Heart right ventricle (tissue), 16 donors: ENCODE measurements at regions of chrX and their contacts with region 1.

Region 1: DNA sequence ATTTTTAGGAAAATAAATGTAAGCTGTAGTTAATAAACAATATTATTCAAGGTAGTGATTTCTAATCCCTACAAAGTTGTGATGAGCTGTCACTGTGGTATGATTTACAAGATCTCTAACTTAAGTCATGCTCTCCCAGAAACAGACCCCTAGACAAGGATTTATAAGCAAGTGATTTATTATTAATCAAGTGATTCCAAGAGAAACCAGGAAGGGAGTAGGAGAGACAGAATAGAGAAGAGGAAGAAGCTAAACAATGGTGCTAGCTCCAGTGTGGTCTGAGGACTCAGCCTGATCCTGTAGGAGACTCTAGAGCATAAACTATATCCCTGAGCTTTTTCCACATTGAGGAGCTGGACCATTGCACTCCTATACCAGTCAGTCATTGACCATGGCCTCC is 73.1 kb downstream of the SYTL5 start:
- DNase-seq: no peak
- ATAC-seq: no peak
- H3K4me3 ChIP-seq: no peak overlapping the region
- H3K27ac ChIP-seq: no peak overlapping the region
- H3K4me1 ChIP-seq: no peaks in the 10 kb centered on the region
- H3K27me3 ChIP-seq: peaks cover 0 to 43% (median 0%) of the 10 kb centered on the region in 7 donors
- CTCF ChIP-seq: no peak

Region 2: GRCh38 chrX:37816766-37817165 is 262.7 kb before region 1 on chrX:
- intact Hi-C with region 1: no loop called
- DNase-seq: no peak
- ATAC-seq: no peak
- H3K4me3 ChIP-seq: no peak overlapping the region
- H3K27ac ChIP-seq: no peak overlapping the region
- H3K4me1 ChIP-seq: peaks cover 0 to 3% (median 0%) of the 10 kb centered on the region in 9 donors
- H3K27me3 ChIP-seq: peaks cover 0 to 33% (median 0%) of the 10 kb centered on the region in 7 donors
- CTCF ChIP-seq: no peak

Region 3: DNA sequence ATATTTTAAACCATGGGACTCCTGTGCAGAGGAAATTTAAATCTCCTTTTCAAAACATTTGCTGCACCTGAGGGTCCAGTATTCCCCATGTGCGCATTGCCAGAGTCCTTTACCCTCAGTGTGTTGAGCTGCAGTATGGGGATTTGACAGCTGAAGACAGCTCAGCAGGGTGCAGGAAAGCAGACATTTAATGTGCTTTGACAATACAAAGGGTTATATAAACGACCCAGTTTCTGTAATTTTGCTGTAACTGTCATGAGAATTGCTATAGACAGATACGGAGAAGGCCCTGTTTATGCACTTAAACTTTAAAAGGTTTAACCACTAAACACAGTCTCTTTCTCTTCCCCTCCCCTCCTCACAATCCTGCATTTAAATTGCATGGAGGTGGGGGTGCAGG is 1115.2 kb after region 1 on chrX:
- intact Hi-C with region 1: loop called in 1 of 10 experiments (anchors 5 kb)
- DNase-seq: no peak
- ATAC-seq: no peak
- H3K4me3 ChIP-seq: no peak overlapping the region
- H3K27ac ChIP-seq: no peak overlapping the region
- H3K4me1 ChIP-seq: peaks cover 0 to 10% (median 0%) of the 10 kb centered on the region in 9 donors
- H3K27me3 ChIP-seq: peaks cover 0 to 33% (median 0%) of the 10 kb centered on the region in 7 donors
- CTCF ChIP-seq: no peak